ENCODE measurements at regions of chr13 and their contacts with region 1.

Region 1: DNA sequence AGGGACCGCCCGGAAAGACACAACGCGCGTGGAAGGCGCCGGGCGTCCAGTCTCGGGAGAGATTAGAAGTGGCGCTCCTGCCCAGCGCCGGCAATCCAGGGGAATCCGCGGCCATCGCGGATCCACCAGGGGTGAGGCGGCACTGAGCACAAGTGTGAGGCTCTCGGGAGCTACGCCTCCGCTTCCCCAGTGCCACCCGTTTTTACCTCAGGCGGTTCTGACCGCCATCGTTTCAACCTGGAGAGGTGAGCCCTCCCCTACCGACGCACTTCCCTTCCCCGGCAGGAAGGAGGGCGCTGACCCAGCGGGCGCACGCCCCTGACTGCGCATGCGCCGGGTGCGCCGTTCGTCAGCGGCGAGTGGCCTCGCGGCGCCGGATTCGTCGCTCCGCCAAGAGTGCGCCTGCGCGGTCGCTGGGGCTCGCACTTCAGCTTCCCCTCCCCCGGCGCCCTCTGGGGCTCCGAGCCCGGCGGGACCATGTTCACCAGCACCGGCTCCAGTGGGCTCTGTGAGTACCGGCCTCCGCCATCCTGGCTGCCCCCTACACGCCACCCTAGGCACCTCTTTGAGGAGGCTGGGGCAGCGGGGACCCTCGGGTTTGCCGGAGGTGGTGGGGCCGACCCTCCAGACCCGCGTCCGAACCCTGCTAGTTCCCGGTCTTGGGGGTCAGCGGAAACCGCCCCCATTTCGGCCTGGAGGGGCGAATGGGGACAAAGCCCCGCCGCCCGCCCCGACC is at the start of gene UBAC2:
- DNase-seq: peak; percentile 93 to 99 (median 97)
- ATAC-seq: peak; percentile 77
- H3K4me3 ChIP-seq: peak within 1 kb of the TSS; percentile 77 to 90
- H3K4me3 Mint-ChIP-seq: peak within 1 kb of the TSS; percentile 90
- H3K27ac ChIP-seq: peak within 1 kb of the TSS; percentile 98 to 99
- H3K27ac Mint-ChIP-seq: peak within 1 kb of the TSS; percentile 94
- H3K4me1 ChIP-seq: peaks cover 53% of the 10 kb centered on the region
- H3K4me1 Mint-ChIP-seq: peaks cover 69% of the 10 kb centered on the region
- H3K27me3 ChIP-seq: no peaks in the 10 kb centered on the region
- H3K27me3 Mint-ChIP-seq: no peaks in the 10 kb centered on the region
- CTCF ChIP-seq: no peak
- total RNA-seq, gene UBAC2: 62.0 to 63.0 TPM

Region 2: DNA sequence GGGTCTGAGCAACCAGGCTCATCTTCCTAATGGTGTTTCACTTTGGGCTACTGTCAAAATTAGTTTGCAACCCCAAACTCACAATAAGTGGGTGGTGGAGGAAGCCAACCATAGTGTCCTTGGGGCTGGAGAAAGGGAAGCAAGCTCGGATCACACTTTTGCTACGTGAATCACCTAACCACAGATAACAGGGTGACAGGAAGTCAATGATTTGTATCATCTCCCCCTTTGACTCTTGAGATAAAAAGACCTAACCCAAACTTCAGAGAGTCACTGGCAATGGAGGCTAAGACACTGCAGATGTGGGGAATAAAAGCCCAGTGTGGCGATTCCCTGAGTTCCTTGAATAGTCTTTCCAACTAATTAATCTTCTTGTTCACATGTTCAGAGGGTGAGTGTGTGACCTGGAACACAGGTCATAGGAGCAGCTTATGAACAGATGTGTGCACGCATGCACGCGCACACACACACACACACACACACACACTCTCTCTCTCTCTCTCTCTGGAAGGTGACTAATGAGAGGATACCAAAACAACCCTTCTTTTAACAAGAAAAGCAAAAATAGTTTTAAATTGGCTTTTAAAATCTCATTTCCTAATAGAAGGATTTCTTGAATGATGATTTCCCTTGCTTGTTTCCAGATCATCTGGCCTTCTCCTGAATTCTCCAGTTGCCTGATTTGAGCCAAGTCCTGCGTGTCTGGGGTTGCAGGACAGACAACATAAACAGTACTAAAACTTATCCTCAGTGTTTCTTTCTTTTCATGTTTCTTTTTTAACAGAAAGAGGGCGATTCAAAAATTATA is 201.6 kb before region 1 on chr13:
- CTCF ChIA-PET with region 1: no interaction called
- POLR2A ChIA-PET with region 1: no interaction called
- intact Hi-C with region 1: no loop called
- DNase-seq: peak in 6 of 9 experiments; percentile 12 to 75 (median 32)
- ATAC-seq: peak; percentile 71
- H3K4me3 ChIP-seq: no peak overlapping the region
- H3K4me3 Mint-ChIP-seq: peak overlapping the region; percentile 66
- H3K27ac ChIP-seq: no peak overlapping the region
- H3K27ac Mint-ChIP-seq: peak overlapping the region; percentile 84
- H3K4me1 ChIP-seq: peaks cover 87% of the 10 kb centered on the region
- H3K4me1 Mint-ChIP-seq: peaks cover 96% of the 10 kb centered on the region
- H3K27me3 ChIP-seq: no peaks in the 10 kb centered on the region
- H3K27me3 Mint-ChIP-seq: no peaks in the 10 kb centered on the region
- CTCF ChIP-seq: no peak

Region 3: GRCh38 chr13:99182439-99182838 is 18.2 kb before region 1 on chr13:
- CTCF ChIA-PET with region 1: interaction called, 47 read pairs
- POLR2A ChIA-PET with region 1: interaction called, 4 read pairs
- intact Hi-C with region 1: loop called (anchors 1 to 2 kb)
- DNase-seq: no peak
- ATAC-seq: no peak
- H3K4me3 ChIP-seq: no peak overlapping the region
- H3K4me3 Mint-ChIP-seq: no peak overlapping the region
- H3K27ac ChIP-seq: no peak overlapping the region
- H3K27ac Mint-ChIP-seq: no peak overlapping the region
- H3K4me1 ChIP-seq: peaks cover 34% of the 10 kb centered on the region
- H3K4me1 Mint-ChIP-seq: peaks cover 33% of the 10 kb centered on the region
- H3K27me3 ChIP-seq: no peaks in the 10 kb centered on the region
- H3K27me3 Mint-ChIP-seq: no peaks in the 10 kb centered on the region
- CTCF ChIP-seq: no peak

Region 4: DNA sequence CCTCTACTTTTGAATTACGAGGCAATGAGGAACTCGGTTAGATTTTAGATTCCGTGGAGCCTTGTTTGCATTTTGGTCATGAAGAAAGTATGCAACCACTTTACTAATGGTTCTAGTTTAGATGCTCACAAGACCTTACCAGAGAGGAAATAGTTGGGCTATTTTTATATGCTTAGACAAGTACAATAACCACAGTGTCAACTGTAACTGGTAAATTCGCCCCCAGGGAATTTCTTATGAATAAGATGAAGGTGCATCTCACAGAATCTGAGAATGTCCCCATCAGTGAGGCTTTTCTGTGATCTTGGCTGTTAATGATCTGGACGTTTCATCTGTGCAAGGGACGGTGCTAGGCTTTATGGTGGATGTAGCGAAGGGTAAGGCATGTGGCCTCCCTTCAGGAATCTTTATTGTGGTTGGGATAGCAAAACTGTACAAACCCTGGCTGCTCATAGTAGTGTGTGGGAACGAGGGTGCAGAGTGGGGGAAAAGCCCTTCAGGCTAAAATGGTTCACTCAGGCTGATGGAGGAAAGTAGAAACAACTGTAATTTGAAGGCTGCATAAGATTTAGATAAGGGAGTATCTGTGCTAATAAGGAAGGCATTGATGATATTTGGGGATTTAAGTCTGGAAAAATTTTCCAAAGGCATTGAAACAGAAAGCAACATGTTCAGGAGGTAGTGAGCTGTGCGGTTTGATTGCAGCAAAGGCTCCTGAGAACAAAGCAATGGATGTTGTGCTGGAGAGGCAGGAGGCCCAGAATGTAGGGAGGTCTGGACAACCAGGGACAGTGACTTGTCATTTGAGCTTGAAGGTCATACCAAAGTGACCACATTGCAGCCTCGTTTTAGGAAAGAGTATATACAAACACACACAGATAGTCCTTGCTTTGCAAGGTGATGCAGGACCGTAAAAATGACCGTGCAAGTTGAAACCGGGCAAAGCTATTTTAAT is 28.4 kb after region 1 on chr13:
- CTCF ChIA-PET with region 1: interaction called, 10 read pairs
- POLR2A ChIA-PET with region 1: interaction called, 5 read pairs
- intact Hi-C with region 1: no loop called
- DNase-seq: peak in 2 of 9 experiments; percentile 60 to 76
- ATAC-seq: peak; percentile 48
- H3K4me3 ChIP-seq: peak overlapping the region; percentile 17 to 31
- H3K4me3 Mint-ChIP-seq: peak overlapping the region; percentile 68
- H3K27ac ChIP-seq: peak overlapping the region in 1 of 2 experiments; percentile 69
- H3K27ac Mint-ChIP-seq: peak overlapping the region; percentile 87
- H3K4me1 ChIP-seq: peaks cover 85% of the 10 kb centered on the region
- H3K4me1 Mint-ChIP-seq: peaks cover 78% of the 10 kb centered on the region
- H3K27me3 ChIP-seq: no peaks in the 10 kb centered on the region
- H3K27me3 Mint-ChIP-seq: no peaks in the 10 kb centered on the region
- CTCF ChIP-seq: no peak

Region 5: GRCh38 chr13:99250982-99251825 is 50.6 kb after region 1 on chr13:
- CTCF ChIA-PET with region 1: interaction called, 13 read pairs
- POLR2A ChIA-PET with region 1: interaction called, 53 read pairs
- intact Hi-C with region 1: no loop called
- DNase-seq: no peak
- ATAC-seq: no peak
- H3K4me3 ChIP-seq: no peak overlapping the region
- H3K4me3 Mint-ChIP-seq: no peak overlapping the region
- H3K27ac ChIP-seq: peak overlapping the region in 1 of 2 experiments; percentile 0
- H3K27ac Mint-ChIP-seq: peak overlapping the region; percentile 79
- H3K4me1 ChIP-seq: peaks cover 51% of the 10 kb centered on the region
- H3K4me1 Mint-ChIP-seq: peaks cover 75% of the 10 kb centered on the region
- H3K27me3 ChIP-seq: no peaks in the 10 kb centered on the region
- H3K27me3 Mint-ChIP-seq: no peaks in the 10 kb centered on the region
- CTCF ChIP-seq: no peak

Region 6: DNA sequence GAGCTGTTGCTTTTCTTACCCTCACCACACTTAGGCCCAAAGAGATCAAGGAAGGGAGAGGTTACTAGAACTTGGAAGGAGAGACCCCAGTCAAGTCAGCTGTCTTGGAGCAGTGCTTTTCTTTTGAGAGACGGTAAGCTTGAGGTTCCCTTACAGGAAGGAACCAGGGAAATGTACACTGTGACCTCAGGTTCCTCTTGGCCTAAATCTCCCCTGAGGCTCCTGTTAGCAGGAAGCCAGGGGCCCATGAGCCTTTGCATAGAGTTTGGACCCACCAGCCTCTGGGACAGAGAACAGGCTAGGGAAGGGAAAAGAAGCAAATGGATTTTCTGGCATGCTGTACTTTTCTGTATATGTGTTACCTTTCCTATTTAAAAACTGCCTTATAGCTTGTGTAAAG is 63.5 kb after region 1 on chr13:
- CTCF ChIA-PET with region 1: interaction called, 254 read pairs
- POLR2A ChIA-PET with region 1: interaction called, 27 read pairs
- intact Hi-C with region 1: loop called (anchors 1 kb)
- DNase-seq: peak in 2 of 9 experiments; percentile 34 to 50
- ATAC-seq: peak; percentile 16
- H3K4me3 ChIP-seq: no peak overlapping the region
- H3K4me3 Mint-ChIP-seq: peak overlapping the region; percentile 27
- H3K27ac ChIP-seq: peak overlapping the region in 1 of 2 experiments; percentile 52
- H3K27ac Mint-ChIP-seq: peak overlapping the region; percentile 90
- H3K4me1 ChIP-seq: peaks cover 53% of the 10 kb centered on the region
- H3K4me1 Mint-ChIP-seq: peaks cover 65% of the 10 kb centered on the region
- H3K27me3 ChIP-seq: no peaks in the 10 kb centered on the region
- H3K27me3 Mint-ChIP-seq: no peaks in the 10 kb centered on the region
- CTCF ChIP-seq: no peak

Region 7: GRCh38 chr13:100454876-100455275 is 1254.3 kb after region 1 on chr13:
- CTCF ChIA-PET with region 1: no interaction called
- POLR2A ChIA-PET with region 1: no interaction called
- intact Hi-C with region 1: no loop called
- DNase-seq: no peak
- ATAC-seq: no peak
- H3K4me3 ChIP-seq: no peak overlapping the region
- H3K4me3 Mint-ChIP-seq: no peak overlapping the region
- H3K27ac ChIP-seq: no peak overlapping the region
- H3K27ac Mint-ChIP-seq: no peak overlapping the region
- H3K4me1 ChIP-seq: no peaks in the 10 kb centered on the region
- H3K4me1 Mint-ChIP-seq: no peaks in the 10 kb centered on the region
- H3K27me3 ChIP-seq: no peaks in the 10 kb centered on the region
- H3K27me3 Mint-ChIP-seq: no peaks in the 10 kb centered on the region
- CTCF ChIP-seq: no peak